AG04450 (cell line): ENCODE measurements at regions of chr19 and their contacts with region 1.

Region 1: GRCh38 chr19:13880059-13881043 is 3.4 kb downstream of the NANOS3 start:
- DNase-seq: peak; percentile 84
- H3K4me3 ChIP-seq: peak overlapping the region; percentile 36
- H3K27ac ChIP-seq: peak overlapping the region; percentile 39
- H3K27me3 ChIP-seq: peaks cover 2% of the 10 kb centered on the region
- CTCF ChIP-seq: peak; percentile 98

Region 2: GRCh38 chr19:13905938-13906904 is 25.9 kb after region 1 on chr19 and contains the starts of genes BRME1 and CC2D1A:
- CTCF ChIA-PET with region 1: interaction called, 10 read pairs
- POLR2A ChIA-PET with region 1: interaction called, 4 read pairs
- DNase-seq: peak; percentile 29
- H3K4me3 ChIP-seq: peak within 1 kb of the TSS; percentile 87
- H3K27ac ChIP-seq: no peak within 1 kb of the TSS
- H3K27me3 ChIP-seq: no peaks in the 10 kb centered on the region
- CTCF ChIP-seq: no peak
- polyA plus RNA-seq, gene BRME1: 0.12 and 0.17 TPM in 2 replicates
- polyA plus RNA-seq, gene CC2D1A: 5.1 and 6.7 TPM in 2 replicates

Region 3: DNA sequence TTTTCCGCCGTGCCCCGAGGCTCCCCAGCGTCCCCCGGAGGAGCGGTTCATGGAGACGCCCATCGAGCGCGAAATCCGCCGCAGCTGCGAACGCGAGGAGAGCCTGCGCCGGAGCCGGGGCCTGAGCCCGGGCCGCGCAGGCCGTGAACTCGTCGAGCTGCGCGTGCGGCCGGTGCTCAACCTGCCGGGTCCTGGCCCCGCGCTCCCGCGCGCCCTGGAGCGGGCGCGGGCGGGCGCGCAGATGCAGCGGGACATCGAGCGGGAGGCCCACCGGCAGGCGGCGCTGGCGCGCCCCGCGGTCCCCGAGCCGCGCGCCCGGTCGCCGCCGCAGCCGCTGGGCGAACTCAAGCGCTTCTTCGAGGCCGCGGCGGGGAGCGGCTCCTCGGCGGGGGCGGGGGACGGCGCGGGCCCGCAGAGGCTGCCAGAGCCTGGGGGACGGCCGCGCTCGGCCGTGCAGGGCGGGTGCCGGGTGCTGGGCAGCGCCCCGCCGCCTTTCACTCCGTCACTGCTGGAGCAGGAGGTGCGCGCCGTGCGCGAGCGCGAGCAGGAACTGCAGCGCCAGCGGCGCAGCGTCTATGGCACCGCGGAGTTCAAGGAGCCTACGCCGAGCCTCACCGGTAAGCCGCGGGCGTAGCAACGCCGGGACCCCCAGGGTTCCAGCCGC is 193.0 kb after region 1 on chr19:
- CTCF ChIA-PET with region 1: interaction called, 29 read pairs
- POLR2A ChIA-PET with region 1: no interaction called
- DNase-seq: no peak
- H3K4me3 ChIP-seq: peak overlapping the region; percentile 74
- H3K27ac ChIP-seq: no peak overlapping the region
- H3K27me3 ChIP-seq: no peaks in the 10 kb centered on the region
- CTCF ChIP-seq: no peak; the same call in 1 of the 2 replicates

Region 4: DNA sequence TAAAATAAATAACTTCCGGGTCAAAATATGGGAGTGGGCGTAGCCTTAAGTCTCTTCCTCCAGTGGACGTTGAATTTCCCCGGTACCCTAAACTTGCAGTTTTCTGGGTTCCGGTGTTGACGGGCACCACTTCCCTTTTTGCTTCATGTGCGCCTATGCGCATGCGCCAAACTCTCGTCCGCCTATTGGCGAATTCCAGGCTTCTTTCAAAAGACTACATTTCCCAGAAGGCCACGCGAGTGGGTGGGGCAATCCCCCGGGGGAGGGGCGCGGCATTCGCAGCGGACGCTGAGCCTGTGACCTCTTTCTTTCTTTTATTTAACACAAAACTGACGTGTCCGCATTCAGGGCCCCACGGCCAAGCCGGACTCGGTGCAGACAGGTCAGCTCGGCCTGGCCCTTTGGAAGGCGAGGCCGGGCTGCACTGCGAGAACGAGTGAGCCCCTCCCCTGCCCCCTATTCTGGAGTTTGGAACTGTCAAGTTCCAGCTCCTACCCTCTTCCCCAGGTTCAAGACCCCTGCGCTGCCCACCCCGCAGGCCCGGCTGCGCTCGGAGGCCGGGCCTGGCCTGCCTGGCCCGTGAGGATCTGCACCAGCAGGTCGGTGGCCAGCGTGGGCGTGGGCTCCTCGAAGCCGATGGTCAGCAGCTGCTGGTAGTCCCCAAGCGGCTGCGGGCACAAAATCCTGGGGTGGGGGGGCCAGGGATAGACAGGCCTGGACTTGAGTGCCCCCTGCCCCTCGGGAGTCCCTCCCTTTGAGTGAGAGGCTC is 201.2 kb after region 1 on chr19:
- CTCF ChIA-PET with region 1: interaction called, 29 read pairs
- POLR2A ChIA-PET with region 1: no interaction called
- DNase-seq: peak; percentile 99
- H3K4me3 ChIP-seq: peak overlapping the region; percentile 75
- H3K27ac ChIP-seq: peak overlapping the region; percentile 86
- H3K27me3 ChIP-seq: no peaks in the 10 kb centered on the region
- CTCF ChIP-seq: no peak